CD8-positive, alpha-beta T cell (primary cell): ENCODE measurements at regions of chr9 and their contacts with region 1.

Region 1: DNA sequence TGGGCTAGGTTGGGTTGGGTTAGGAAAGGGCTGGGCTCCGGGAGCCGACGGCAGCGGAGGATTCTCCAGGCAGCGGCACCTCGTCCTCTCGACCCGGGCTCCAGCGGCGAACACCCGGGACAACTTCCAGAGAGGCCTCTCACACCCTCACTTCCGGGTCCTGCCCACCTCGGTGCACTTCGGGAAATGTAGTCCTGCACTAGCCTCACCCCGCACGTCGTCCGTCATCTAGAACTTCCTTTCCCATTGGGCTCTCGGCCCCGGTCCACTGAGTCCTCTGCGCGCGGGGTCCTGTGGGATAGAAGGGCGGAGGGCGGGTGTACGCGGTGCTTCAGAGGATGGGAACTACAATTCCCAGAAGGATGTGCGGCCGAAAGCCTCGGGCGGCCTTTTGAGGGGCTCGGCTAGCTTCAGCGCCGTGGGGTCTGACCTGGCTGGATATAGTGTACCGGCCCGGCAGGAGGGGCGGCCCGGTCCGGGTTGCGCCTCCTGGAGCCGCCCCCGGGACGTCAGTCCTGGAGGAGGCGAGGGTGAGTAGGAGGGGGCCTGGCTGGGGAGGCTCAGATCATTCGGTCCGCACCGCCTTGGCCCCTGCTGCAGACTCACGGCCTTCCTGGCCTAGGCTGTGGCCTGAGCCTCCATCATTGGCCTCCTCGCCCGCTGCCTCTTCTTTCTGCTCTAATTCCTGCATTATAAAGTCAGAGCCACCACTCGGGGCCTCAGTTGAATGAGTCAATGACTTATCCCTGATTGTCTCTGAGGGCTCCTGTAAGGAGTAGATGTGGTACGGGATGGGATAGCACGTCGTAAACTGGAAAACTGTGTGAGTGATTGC is at the starts of genes ERP44 and INVS:
- DNase-seq: peak; percentile 93 to 99 (median 96)
- ATAC-seq: peak; percentile 99
- H3K4me3 ChIP-seq: peak within 1 kb of the TSS; percentile 95 to 98
- H3K4me3 Mint-ChIP-seq: peak within 1 kb of the TSS; percentile 99
- H3K27ac ChIP-seq: peak within 1 kb of the TSS; percentile 72 to 85
- H3K27ac Mint-ChIP-seq: peak within 1 kb of the TSS; percentile 97
- H3K4me1 ChIP-seq: peaks cover 31% of the 10 kb centered on the region
- H3K4me1 Mint-ChIP-seq: peaks cover 44% of the 10 kb centered on the region
- H3K27me3 ChIP-seq: no peaks in the 10 kb centered on the region
- H3K27me3 Mint-ChIP-seq: no peaks in the 10 kb centered on the region
- CTCF ChIP-seq: no peak
- total RNA-seq, gene ERP44: 7.6 to 8.5 TPM
- total RNA-seq, gene INVS: 12.5 to 13.2 TPM

Region 2: DNA sequence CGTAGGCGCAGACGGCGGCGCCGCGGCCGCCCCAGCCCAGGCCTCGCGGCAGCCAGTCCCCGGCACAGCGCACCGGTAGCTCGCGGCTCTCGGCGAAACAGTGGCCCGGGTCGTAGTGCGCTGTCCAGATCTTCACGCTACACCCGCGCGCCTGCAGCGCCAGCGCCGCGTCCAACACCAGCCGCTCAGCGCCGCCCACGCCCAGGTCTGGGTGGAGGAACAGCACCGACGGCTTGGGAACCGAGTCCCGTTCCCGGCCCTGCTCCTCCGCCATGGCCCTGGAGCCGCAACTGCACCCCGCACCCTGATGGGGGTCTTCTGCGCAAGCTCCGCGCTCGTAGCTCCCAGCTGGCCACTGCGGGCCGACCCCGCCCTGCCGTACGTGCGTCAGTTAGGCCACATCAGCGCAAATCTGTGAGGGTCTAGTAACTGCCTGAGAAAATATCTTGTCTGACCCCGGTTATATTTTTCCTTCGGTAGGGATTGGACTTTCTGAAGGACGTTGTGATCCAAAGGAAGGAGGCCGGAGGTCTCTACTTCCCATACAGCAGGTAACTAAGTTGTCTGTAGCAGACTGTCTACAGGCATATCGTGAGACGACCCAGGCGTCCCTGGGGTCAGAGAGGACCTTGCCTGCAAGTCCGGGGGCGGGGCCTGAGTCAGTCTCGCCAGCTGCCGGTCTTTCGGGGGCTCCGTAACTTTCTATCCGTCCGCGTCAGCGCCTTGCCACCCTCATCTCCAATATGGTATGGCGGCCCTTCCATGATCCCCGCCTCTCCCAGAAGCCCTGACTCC is 877.3 kb before region 1 on chr9 and contains the starts of genes ALG2 and SEC61B:
- CTCF ChIA-PET with region 1: no interaction called
- POLR2A ChIA-PET with region 1: no interaction called
- intact Hi-C with region 1: loop called in 1 of 2 experiments (anchors 1 kb)
- DNase-seq: peak; percentile 87 to 96 (median 94)
- ATAC-seq: peak; percentile 88
- H3K4me3 ChIP-seq: peak within 1 kb of the TSS; percentile 79 to 90
- H3K4me3 Mint-ChIP-seq: peak within 1 kb of the TSS; percentile 99
- H3K27ac ChIP-seq: peak within 1 kb of the TSS; percentile 95 to 99
- H3K27ac Mint-ChIP-seq: peak within 1 kb of the TSS; percentile 100
- H3K4me1 ChIP-seq: peaks cover 30% of the 10 kb centered on the region
- H3K4me1 Mint-ChIP-seq: peaks cover 80% of the 10 kb centered on the region
- H3K27me3 ChIP-seq: no peaks in the 10 kb centered on the region
- H3K27me3 Mint-ChIP-seq: no peaks in the 10 kb centered on the region
- CTCF ChIP-seq: no peak
- total RNA-seq, gene ALG2: 21.0 to 24.7 TPM
- total RNA-seq, gene SEC61B: 107 to 108 TPM

Region 3: DNA sequence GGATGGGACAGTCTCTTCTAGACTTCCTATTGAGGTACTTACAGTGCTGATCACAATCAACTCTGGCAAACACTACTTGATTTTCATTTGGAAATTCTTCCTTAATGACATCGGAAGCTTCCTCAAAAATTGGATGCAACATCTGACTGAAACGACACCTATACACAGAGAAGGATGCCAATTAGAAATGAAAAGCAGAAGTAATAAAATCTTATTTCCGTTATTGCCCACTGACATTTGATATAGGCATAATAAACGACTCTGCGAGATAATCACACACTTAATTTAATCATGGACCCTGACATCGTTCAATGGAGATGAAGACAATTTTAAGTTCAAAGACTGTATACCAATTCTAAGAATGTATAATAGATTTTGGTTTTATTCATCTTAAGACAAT is 46.7 kb before region 1 on chr9:
- CTCF ChIA-PET with region 1: no interaction called
- POLR2A ChIA-PET with region 1: no interaction called
- intact Hi-C with region 1: no loop called
- DNase-seq: no peak
- ATAC-seq: no peak
- H3K4me3 ChIP-seq: no peak overlapping the region
- H3K4me3 Mint-ChIP-seq: no peak overlapping the region
- H3K27ac ChIP-seq: no peak overlapping the region
- H3K27ac Mint-ChIP-seq: peak overlapping the region; percentile 56
- H3K4me1 ChIP-seq: no peaks in the 10 kb centered on the region
- H3K4me1 Mint-ChIP-seq: peaks cover 12% of the 10 kb centered on the region
- H3K27me3 ChIP-seq: no peaks in the 10 kb centered on the region
- H3K27me3 Mint-ChIP-seq: no peaks in the 10 kb centered on the region
- CTCF ChIP-seq: no peak

Region 4: GRCh38 chr9:100411472-100412283 is 312.6 kb after region 1 on chr9:
- CTCF ChIA-PET with region 1: no interaction called
- POLR2A ChIA-PET with region 1: no interaction called
- intact Hi-C with region 1: loop called (anchors 1 to 5 kb)
- DNase-seq: peak; percentile 60 to 94 (median 87)
- ATAC-seq: peak; percentile 100
- H3K4me3 ChIP-seq: peak overlapping the region; percentile 42 to 57
- H3K4me3 Mint-ChIP-seq: peak overlapping the region; percentile 94
- H3K27ac ChIP-seq: peak overlapping the region in 1 of 2 experiments; percentile 25
- H3K27ac Mint-ChIP-seq: peak overlapping the region; percentile 83
- H3K4me1 ChIP-seq: peaks cover 9% of the 10 kb centered on the region
- H3K4me1 Mint-ChIP-seq: peaks cover 13% of the 10 kb centered on the region
- H3K27me3 ChIP-seq: peaks cover 0 to 5% of the 10 kb centered on the region in 2 experiments
- H3K27me3 Mint-ChIP-seq: peaks cover 26% of the 10 kb centered on the region
- CTCF ChIP-seq: no peak

Region 5: GRCh38 chr9:101398068-101398929 is 1299.2 kb after region 1 on chr9 and contains the starts of genes MRPL50 and ZNF189:
- CTCF ChIA-PET with region 1: no interaction called
- POLR2A ChIA-PET with region 1: no interaction called
- intact Hi-C with region 1: loop called (anchors 2 to 5 kb)
- DNase-seq: peak; percentile 89 to 99 (median 95)
- ATAC-seq: peak; percentile 93
- H3K4me3 ChIP-seq: peak within 1 kb of the TSS; percentile 87 to 91
- H3K4me3 Mint-ChIP-seq: peak within 1 kb of the TSS; percentile 97
- H3K27ac ChIP-seq: peak within 1 kb of the TSS; percentile 96 to 98
- H3K27ac Mint-ChIP-seq: peak within 1 kb of the TSS; percentile 99
- H3K4me1 ChIP-seq: peaks cover 54% of the 10 kb centered on the region
- H3K4me1 Mint-ChIP-seq: peaks cover 80% of the 10 kb centered on the region
- H3K27me3 ChIP-seq: no peaks in the 10 kb centered on the region
- H3K27me3 Mint-ChIP-seq: no peaks in the 10 kb centered on the region
- CTCF ChIP-seq: no peak
- total RNA-seq, gene MRPL50: 7.5 to 8.4 TPM
- total RNA-seq, gene ZNF189: 4.0 to 5.2 TPM